AG04450 (cell line): ENCODE measurements at regions of chr9 and their contacts with region 1.

Region 1: DNA sequence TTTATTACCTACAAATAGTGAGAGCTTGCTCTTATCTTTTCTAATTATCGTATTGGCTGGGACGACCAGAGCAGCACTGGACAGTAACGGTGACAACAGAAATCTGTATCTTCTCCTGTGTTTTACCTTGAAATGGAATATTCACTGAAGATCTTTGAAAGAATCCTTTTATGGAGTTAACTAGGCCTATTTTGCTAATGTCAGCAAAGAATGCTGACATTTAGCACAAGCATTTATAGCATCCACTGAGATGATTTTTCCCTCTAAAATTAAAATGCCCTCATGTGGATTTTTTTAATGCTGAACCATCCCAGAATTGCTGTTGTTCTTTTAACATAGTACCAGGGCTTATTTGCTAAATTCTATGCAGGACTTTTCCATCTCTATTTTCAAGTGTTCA is 59.4 kb downstream of the ROR2 start:
- DNase-seq: no peak
- H3K4me3 ChIP-seq: no peak overlapping the region
- H3K27ac ChIP-seq: no peak overlapping the region
- H3K27me3 ChIP-seq: no peaks in the 10 kb centered on the region
- CTCF ChIP-seq: no peak

Region 2: DNA sequence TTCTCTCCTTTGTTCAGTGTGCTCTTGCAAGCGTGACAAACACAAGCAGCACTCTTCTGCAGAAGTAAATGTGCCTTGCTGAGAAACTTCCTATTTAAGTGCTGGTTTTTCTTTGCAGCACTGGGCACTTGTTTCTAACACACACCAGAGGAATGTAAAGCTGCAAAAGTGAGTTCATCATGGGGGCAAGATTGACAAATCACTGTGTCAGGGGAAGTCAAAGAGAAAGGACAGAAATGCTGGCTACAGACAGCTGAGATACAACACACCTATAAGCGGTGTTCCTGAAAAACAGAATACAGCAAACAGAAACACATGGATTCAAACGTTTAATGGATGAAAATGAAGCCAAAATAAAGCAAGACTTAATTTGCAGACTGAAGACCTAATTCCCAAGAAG is 39.8 kb after region 1 on chr9:
- CTCF ChIA-PET with region 1: no interaction called
- POLR2A ChIA-PET with region 1: no interaction called
- DNase-seq: no peak
- H3K4me3 ChIP-seq: no peak overlapping the region
- H3K27ac ChIP-seq: no peak overlapping the region
- H3K27me3 ChIP-seq: peaks cover 3% of the 10 kb centered on the region
- CTCF ChIP-seq: no peak

Region 3: GRCh38 chr9:92206488-92206887 is 315.8 kb after region 1 on chr9:
- CTCF ChIA-PET with region 1: no interaction called
- POLR2A ChIA-PET with region 1: interaction called, 10 read pairs
- DNase-seq: no peak
- H3K4me3 ChIP-seq: no peak overlapping the region
- H3K27ac ChIP-seq: peak overlapping the region; percentile 11
- H3K27me3 ChIP-seq: no peaks in the 10 kb centered on the region
- CTCF ChIP-seq: no peak